ENCODE measurements at regions of chr19 and their contacts with region 1.

Region 1: GRCh38 chr19:44587963-44588770 is 25.2 kb upstream of the IGSF23 start:
- DNase-seq: peak; percentile 64 to 99
- H3K4me3 ChIP-seq: peak overlapping the region; percentile 28
- H3K27ac ChIP-seq: peak overlapping the region; percentile 98
- H3K4me1 ChIP-seq: peaks cover 82% of the 10 kb centered on the region
- H3K27me3 ChIP-seq: no peaks in the 10 kb centered on the region
- CTCF ChIP-seq: peak; percentile 75

Region 2: DNA sequence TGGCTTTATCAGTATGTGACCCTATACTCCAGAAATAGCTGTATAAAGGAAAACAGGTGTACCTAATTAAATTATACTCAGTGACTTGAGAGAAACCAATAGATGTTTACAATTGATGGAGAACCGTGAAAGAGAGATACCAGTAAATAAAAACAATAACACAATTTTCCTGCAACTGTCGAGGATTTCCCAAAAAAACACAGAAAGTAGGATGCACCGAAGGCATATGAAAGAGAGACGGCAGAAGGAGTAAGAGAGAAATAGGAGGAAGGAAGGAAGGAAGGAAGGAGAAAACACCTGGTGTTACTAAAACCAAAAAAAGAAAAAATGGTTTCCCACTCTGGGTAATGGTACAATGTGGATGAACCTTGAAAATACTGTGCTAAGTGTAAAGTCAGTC is 133.1 kb before region 1 on chr19:
- CTCF ChIA-PET with region 1: no interaction called
- POLR2A ChIA-PET with region 1: no interaction called
- intact Hi-C with region 1: no loop called
- DNase-seq: no peak
- H3K4me3 ChIP-seq: no peak overlapping the region
- H3K27ac ChIP-seq: no peak overlapping the region
- H3K4me1 ChIP-seq: no peaks in the 10 kb centered on the region
- H3K27me3 ChIP-seq: peaks cover 70% of the 10 kb centered on the region
- CTCF ChIP-seq: no peak

Region 3: DNA sequence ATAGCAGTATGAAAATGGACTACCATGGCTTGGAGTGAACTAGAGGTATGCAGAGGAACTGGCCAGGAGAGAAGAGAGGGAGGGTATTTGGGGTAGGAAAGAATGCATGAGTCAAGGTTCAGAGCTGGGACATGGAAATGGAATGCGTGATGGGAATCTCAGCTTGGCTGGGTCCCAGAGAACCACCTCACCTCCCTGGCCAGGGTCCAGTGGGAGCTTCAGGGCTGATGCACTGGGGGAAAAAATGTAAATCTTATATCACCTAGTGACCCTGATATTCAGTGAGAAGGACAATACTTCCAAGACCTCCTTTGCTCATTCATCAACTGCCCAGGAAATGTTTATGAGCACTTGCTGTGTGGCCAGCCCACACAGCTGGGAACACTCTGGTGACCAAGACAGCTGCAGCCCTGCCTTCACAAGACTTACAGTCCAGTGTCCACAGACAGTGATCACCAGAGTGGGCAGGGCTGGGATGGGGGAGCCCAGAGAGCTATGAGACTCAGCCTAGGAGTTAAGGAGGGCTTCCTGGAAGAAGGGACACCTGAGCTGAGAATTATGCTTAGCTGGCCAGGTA is 38.0 kb after region 1 on chr19:
- CTCF ChIA-PET with region 1: interaction called, 3 read pairs
- POLR2A ChIA-PET with region 1: interaction called, 3 read pairs
- intact Hi-C with region 1: loop called (anchors 1 kb)
- DNase-seq: peak; percentile 94 to 98
- H3K4me3 ChIP-seq: no peak overlapping the region
- H3K27ac ChIP-seq: peak overlapping the region; percentile 91
- H3K4me1 ChIP-seq: peaks cover 31% of the 10 kb centered on the region
- H3K27me3 ChIP-seq: no peaks in the 10 kb centered on the region
- CTCF ChIP-seq: no peak

Region 4: GRCh38 chr19:44643605-44644401 is 55.6 kb after region 1 on chr19 and contains the start of gene PVR:
- CTCF ChIA-PET with region 1: interaction called, 3 read pairs
- POLR2A ChIA-PET with region 1: interaction called, 6 read pairs
- intact Hi-C with region 1: loop called (anchors 1 kb)
- DNase-seq: peak; percentile 70 to 78
- H3K4me3 ChIP-seq: peak within 1 kb of the TSS; percentile 88
- H3K27ac ChIP-seq: peak within 1 kb of the TSS; percentile 92
- H3K4me1 ChIP-seq: peaks cover 49% of the 10 kb centered on the region
- H3K27me3 ChIP-seq: no peaks in the 10 kb centered on the region
- CTCF ChIP-seq: no peak
- total RNA-seq, gene PVR: 50.8 and 52.1 TPM in 2 replicates

Region 5: DNA sequence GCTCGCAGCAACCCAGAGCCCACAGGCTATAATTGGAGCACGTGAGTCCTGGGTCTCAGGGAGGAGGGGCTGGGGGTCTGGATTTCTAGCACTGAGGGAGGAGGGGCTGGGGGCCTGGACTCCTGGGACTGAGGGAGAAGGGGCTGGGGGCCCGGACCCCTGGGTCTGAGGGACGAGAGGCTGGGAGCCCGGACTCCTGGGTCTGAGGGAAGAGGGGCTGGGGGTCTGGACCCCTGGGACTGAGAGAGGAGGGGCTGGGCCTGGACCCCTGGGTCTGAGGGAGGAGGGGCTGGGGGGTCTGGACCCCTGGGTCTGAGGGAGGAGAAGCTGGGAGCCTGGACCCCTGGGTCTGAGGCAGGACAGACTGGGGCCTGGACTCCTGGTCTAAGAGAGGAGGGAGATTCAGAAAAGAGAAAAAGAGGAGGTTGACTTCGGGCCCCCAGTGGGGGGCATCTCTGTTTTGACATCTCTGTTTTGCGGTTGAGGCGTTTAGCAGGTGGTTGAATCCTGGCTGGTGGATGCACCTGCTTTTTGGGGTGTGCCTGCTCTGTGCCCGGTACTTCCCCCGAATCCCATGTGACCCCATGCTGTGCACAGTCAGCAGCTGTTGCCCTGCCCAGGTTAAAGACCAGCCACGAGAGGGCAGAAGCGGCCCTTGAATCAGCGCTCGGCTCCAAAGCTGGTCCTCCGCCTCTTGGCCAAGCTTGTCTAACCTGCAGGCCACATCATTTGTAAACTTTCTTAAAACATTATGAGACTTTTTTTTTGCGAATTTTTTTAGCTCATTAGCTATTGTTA is 66.0 kb after region 1 on chr19:
- CTCF ChIA-PET with region 1: interaction called, 7 read pairs
- POLR2A ChIA-PET with region 1: no interaction called
- intact Hi-C with region 1: loop called (anchors 1 kb)
- DNase-seq: peak; percentile 76 to 84
- H3K4me3 ChIP-seq: no peak overlapping the region
- H3K27ac ChIP-seq: peak overlapping the region; percentile 33
- H3K4me1 ChIP-seq: peaks cover 8% of the 10 kb centered on the region; the same call in 1 of the 2 replicates
- H3K27me3 ChIP-seq: no peaks in the 10 kb centered on the region
- CTCF ChIP-seq: peak; percentile 77

Region 6: DNA sequence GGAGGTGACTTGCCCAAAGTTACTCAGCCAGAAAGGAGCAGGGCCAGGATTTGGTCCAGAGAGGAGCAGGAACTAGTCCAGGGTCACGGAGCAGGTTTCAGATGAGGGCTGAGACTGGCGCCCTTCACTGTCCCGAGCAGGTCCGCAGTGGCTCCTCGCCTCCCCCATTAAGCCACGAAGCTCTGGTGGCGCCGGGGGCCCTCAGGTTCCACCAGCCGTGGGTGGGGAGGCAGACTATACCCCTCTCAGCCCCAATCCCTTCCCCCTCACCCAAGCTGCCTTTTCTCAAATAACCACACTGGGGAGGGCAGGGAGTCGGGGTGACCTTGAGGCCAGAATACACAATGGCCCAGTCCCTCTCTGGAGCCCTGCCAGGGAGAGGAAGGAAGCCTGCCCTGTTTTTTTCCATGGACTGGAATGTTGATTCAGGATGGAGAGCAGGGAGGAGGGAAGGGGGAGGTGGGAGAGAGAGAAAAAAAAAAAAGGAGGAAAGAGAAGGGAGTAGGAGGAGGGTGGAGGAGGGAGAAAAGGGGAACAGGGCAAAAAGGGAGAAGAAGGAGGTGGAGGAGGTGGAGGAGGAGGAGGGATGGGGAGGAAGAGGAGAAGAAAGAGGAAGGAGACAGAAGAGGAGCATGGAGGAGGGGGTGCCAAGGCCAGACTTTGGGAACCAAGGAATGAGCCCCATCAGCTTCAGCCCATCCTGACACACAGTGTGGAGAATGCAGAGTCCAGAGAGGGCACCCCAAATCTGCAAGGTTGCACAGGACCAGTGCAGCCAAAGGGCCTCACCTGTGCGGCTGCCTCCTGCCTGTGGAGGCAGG is 130.5 kb after region 1 on chr19:
- CTCF ChIA-PET with region 1: no interaction called
- POLR2A ChIA-PET with region 1: interaction called, 24 read pairs
- intact Hi-C with region 1: loop called (anchors 2 kb)
- DNase-seq: peak; percentile 75 to 79
- H3K4me3 ChIP-seq: peak overlapping the region; percentile 32; the same call in 1 of the 2 replicates
- H3K27ac ChIP-seq: peak overlapping the region; percentile 86
- H3K4me1 ChIP-seq: peaks cover 57% of the 10 kb centered on the region
- H3K27me3 ChIP-seq: no peaks in the 10 kb centered on the region
- CTCF ChIP-seq: no peak

Region 7: GRCh38 chr19:44808463-44809371 is 220.6 kb after region 1 on chr19 and contains the start of gene BCAM:
- CTCF ChIA-PET with region 1: no interaction called
- POLR2A ChIA-PET with region 1: no interaction called
- intact Hi-C with region 1: loop called (anchors 1 kb)
- DNase-seq: peak; percentile 55 to 88
- H3K4me3 ChIP-seq: peak within 1 kb of the TSS; percentile 95
- H3K27ac ChIP-seq: peak within 1 kb of the TSS; percentile 80
- H3K4me1 ChIP-seq: peaks cover 43% of the 10 kb centered on the region
- H3K27me3 ChIP-seq: no peaks in the 10 kb centered on the region
- CTCF ChIP-seq: no peak
- total RNA-seq, gene BCAM: 146 and 199 TPM in 2 replicates

Measured in PC-9 (cell line).